Calu3 (cell line): ENCODE measurements at regions of chr3 and their contacts with region 1.

Region 1: GRCh38 chr3:186849374-186849975 is 7.0 kb downstream of the ADIPOQ start:
- DNase-seq: no peak
- H3K4me3 Mint-ChIP-seq: no peak overlapping the region
- H3K27ac Mint-ChIP-seq: no peak overlapping the region
- H3K4me1 Mint-ChIP-seq: no peaks in the 10 kb centered on the region
- H3K27me3 Mint-ChIP-seq: peaks cover 72% of the 10 kb centered on the region
- CTCF ChIP-seq: no peak

Region 2: DNA sequence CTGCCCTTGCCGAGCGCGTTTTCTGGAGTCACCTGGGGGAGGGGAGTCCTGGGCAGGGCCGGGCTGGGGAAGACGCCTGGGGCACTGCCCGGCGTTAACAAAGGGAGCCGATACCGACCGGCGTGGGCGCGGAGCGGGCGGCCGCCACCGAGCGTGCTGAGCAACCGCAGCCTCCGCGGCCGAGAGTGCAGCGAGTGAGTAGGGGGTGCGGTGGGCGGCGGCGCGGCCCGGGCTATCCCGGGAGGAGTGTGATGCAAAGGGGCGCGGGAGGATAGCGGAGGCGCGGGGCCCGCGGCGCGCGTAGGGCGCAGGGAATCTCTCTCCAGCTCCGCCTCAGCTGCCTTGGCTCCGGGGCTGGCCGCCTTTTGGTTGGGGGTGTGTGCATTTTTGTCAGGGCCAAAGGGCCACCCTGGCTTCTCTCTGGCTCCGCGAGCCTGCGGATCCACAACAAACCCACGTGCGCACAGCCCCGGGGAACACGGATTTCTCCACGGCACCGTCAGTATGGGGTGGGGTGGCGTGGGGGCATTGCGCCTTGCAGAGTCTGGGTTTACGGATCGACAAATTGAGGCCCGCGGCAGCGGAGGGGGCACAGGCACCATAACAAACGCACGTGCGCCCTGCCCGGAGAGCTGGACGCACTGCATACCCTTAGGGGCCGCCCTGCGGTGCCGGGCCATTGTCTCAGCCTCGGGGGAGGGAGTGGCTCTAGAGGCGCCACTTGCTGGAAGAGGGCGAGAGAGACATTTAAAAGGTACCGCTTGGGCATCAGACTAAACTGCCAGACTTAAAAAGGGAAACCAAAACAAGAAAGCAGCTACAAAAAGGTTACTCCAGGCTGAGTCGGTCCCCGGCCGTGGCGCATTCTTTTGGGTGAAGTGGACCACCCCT is 81.4 kb after region 1 on chr3:
- CTCF ChIA-PET with region 1: interaction called, 17 read pairs
- intact Hi-C with region 1: loop called (anchors 1 kb)
- DNase-seq: peak; percentile 79
- H3K4me3 Mint-ChIP-seq: peak overlapping the region; percentile 80
- H3K27ac Mint-ChIP-seq: peak overlapping the region; percentile 4
- H3K4me1 Mint-ChIP-seq: peaks cover 24% of the 10 kb centered on the region
- H3K27me3 Mint-ChIP-seq: peaks cover 55% of the 10 kb centered on the region
- CTCF ChIP-seq: no peak

Region 3: GRCh38 chr3:187112934-187113793 is 263.7 kb after region 1 on chr3:
- CTCF ChIA-PET with region 1: interaction called, 12 read pairs
- intact Hi-C with region 1: loop called (anchors 1 kb)
- DNase-seq: peak; percentile 24
- H3K4me3 Mint-ChIP-seq: no peak overlapping the region
- H3K27ac Mint-ChIP-seq: no peak overlapping the region
- H3K4me1 Mint-ChIP-seq: peaks cover 12% of the 10 kb centered on the region
- H3K27me3 Mint-ChIP-seq: no peaks in the 10 kb centered on the region
- CTCF ChIP-seq: peak; percentile 59

Region 4: GRCh38 chr3:187150599-187150998 is 301.1 kb after region 1 on chr3:
- CTCF ChIA-PET with region 1: interaction called, 12 read pairs
- intact Hi-C with region 1: no loop called
- DNase-seq: peak; percentile 48
- H3K4me3 Mint-ChIP-seq: no peak overlapping the region
- H3K27ac Mint-ChIP-seq: no peak overlapping the region
- H3K4me1 Mint-ChIP-seq: no peaks in the 10 kb centered on the region
- H3K27me3 Mint-ChIP-seq: peaks cover 45% of the 10 kb centered on the region
- CTCF ChIP-seq: peak; percentile 17

Region 5: GRCh38 chr3:187291001-187291511 is 441.6 kb after region 1 on chr3:
- CTCF ChIA-PET with region 1: no interaction called
- intact Hi-C with region 1: loop called (anchors 10 kb)
- DNase-seq: peak; percentile 30
- H3K4me3 Mint-ChIP-seq: peak overlapping the region; percentile 18
- H3K27ac Mint-ChIP-seq: no peak overlapping the region
- H3K4me1 Mint-ChIP-seq: peaks cover 29% of the 10 kb centered on the region
- H3K27me3 Mint-ChIP-seq: no peaks in the 10 kb centered on the region
- CTCF ChIP-seq: no peak